ENCODE measurements at regions of chr12 and their contacts with region 1.

Region 1: DNA sequence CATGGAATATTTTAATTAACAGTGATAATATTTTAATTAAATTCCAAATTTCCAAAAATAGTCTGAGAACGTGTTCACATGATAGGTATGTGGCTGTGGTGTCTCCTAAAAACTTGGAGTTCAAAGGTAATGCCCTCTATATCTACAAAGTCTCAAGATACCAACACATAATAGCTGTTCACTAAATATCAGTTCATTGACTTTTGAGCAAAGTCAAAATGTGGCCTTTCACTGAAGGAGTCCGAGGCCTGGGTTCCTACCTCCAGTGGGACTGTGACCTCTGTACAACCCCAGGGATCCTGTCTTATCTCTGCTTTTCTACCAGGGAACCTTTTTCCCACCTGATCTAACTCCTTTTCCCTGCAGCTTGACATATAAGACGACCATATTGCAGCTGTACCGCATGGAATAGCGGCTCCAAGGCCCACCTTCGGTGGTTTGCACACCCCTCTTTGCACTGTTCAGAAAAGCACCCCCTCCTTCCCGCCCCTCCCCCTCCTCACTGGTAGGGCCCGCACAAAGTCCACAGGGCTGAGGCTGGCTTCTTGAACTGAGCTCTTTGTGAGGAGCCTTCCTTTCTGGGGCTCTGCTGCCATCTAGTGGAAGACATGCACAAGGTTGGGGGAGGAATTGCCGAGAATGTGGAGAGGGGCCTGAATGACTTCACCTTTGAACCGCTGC is 3.1 kb downstream of the CCND2 start:
- DNase-seq: peak; percentile 61 to 88 (median 87)
- ATAC-seq: peak; percentile 59
- H3K4me3 ChIP-seq: peak overlapping the region; percentile 85
- H3K4me3 Mint-ChIP-seq: peak overlapping the region; percentile 89 to 99 (median 95)
- H3K27ac ChIP-seq: peak overlapping the region; percentile 97
- H3K27ac Mint-ChIP-seq: peak overlapping the region; percentile 82 to 98 (median 96)
- H3K4me1 ChIP-seq: peaks cover 34 to 56% of the 10 kb centered on the region in 2 donors
- H3K4me1 Mint-ChIP-seq: peaks cover 41 to 66% (median 59%) of the 10 kb centered on the region in 7 donors
- H3K27me3 ChIP-seq: no peaks in the 10 kb centered on the region
- H3K27me3 Mint-ChIP-seq: peaks cover 0 to 2% (median 0%) of the 10 kb centered on the region in 5 donors

Region 2: DNA sequence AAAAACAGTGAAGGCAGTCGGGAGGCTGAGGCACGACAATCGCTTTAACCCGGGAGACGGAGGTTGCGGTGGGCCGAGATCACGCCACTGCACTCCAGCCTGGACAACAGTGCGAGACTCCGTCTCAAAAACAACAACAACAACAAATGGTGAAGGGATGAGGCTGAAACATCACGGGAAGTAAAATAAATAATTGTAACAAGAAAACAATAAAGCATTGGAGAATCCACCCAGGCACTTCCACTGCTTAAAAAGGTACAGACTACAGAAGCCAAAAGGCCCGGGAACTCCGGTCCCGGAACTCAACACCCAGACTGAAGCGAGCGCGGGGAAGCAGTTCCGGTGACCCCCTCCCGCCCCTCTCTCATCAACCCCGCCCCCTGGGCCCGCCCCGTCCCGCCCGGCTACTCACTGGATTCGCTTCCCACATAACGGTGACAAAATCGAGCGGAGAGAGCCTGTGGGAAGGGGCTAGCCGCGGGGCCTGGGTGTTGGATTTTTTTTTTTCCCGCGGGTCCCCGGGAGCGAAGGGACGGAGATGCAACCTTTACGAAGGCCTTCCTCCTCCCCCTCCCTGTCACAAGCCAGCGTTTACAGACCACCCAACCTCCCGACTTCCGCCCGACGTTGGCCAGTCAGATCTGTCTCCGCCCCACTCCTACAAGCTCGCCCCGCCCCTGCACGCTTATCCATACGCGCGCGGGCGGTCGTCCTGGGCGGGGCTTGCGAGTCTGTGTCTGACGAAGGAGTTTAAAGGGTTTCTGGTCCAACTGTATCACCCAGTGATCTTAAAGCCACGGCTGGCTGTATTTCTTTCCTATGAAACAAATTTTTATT is 403.6 kb before region 1 on chr12 and contains the start of gene PARP11:
- CTCF ChIA-PET with region 1: interaction called, 4 read pairs
- POLR2A ChIA-PET with region 1: interaction called, 7 read pairs
- intact Hi-C with region 1: loop called (anchors 1 kb)
- DNase-seq: peak; percentile 93 to 98 (median 96)
- ATAC-seq: peak; percentile 98
- H3K4me3 ChIP-seq: peak within 1 kb of the TSS; percentile 93
- H3K4me3 Mint-ChIP-seq: peak within 1 kb of the TSS; percentile 90 to 99 (median 94)
- H3K27ac ChIP-seq: peak within 1 kb of the TSS; percentile 96
- H3K27ac Mint-ChIP-seq: peak within 1 kb of the TSS; percentile 95 to 99 (median 98)
- H3K4me1 ChIP-seq: peaks cover 23 to 32% of the 10 kb centered on the region in 2 donors
- H3K4me1 Mint-ChIP-seq: peaks cover 31 to 58% (median 55%) of the 10 kb centered on the region in 7 donors
- H3K27me3 ChIP-seq: no peaks in the 10 kb centered on the region
- H3K27me3 Mint-ChIP-seq: peaks cover 0 to 6% (median 0%) of the 10 kb centered on the region in 5 donors
- total RNA-seq, gene PARP11: 21.5 to 37.4 (median 35.1) TPM

Region 3: GRCh38 chr12:3964439-3964838 is 312.2 kb before region 1 on chr12:
- CTCF ChIA-PET with region 1: interaction called, 55 read pairs
- POLR2A ChIA-PET with region 1: interaction called, 21 read pairs
- intact Hi-C with region 1: loop called in 1 of 2 experiments (anchors 1 kb)
- DNase-seq: no peak
- ATAC-seq: no peak
- H3K4me3 ChIP-seq: no peak overlapping the region
- H3K4me3 Mint-ChIP-seq: no peak overlapping the region
- H3K27ac ChIP-seq: no peak overlapping the region
- H3K27ac Mint-ChIP-seq: peak overlapping the region in 4 of 9 donors; percentile 72 to 89 (median 84)
- H3K4me1 ChIP-seq: peaks cover 0 to 20% of the 10 kb centered on the region in 2 donors
- H3K4me1 Mint-ChIP-seq: peaks cover 13 to 47% (median 24%) of the 10 kb centered on the region in 7 donors
- H3K27me3 ChIP-seq: no peaks in the 10 kb centered on the region
- H3K27me3 Mint-ChIP-seq: no peaks in the 10 kb centered on the region

Region 4: DNA sequence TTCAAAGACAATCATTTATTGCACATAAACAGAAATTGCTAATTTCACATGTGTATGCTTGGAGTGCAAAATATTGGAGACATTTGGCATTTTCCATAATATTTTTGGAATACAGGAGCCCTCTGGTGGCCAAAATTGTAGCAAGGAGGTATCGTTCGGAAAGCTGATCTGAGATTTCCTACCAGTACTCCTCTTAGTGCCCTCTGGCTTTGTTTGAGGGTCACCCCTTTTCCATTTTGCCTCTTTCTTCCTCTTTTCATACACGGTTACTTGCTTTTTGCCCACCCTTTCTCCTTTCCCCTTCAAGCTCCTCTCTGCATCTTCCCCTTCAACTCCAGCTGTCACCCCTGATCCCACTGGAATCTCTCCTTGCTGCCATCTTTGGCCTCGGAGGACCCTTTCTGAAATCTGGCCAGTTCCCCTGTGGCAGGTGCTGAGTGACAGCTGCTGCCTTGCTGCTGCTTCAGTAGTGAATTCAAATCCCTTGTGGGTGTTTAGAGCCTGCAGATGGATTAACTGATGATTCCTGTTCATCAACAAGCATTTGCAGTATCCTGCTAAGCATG is 238.8 kb before region 1 on chr12:
- CTCF ChIA-PET with region 1: interaction called, 27 read pairs
- POLR2A ChIA-PET with region 1: no interaction called
- intact Hi-C with region 1: loop called in 1 of 2 experiments (anchors 1 kb)
- DNase-seq: peak in 5 of 9 donors; percentile 19 to 31 (median 21)
- ATAC-seq: no peak
- H3K4me3 ChIP-seq: no peak overlapping the region
- H3K4me3 Mint-ChIP-seq: no peak overlapping the region
- H3K27ac ChIP-seq: no peak overlapping the region
- H3K27ac Mint-ChIP-seq: no peak overlapping the region
- H3K4me1 ChIP-seq: no peaks in the 10 kb centered on the region
- H3K4me1 Mint-ChIP-seq: peaks cover 0 to 15% (median 0%) of the 10 kb centered on the region in 7 donors
- H3K27me3 ChIP-seq: no peaks in the 10 kb centered on the region
- H3K27me3 Mint-ChIP-seq: peaks cover 0 to 39% (median 0%) of the 10 kb centered on the region in 5 donors

Region 5: DNA sequence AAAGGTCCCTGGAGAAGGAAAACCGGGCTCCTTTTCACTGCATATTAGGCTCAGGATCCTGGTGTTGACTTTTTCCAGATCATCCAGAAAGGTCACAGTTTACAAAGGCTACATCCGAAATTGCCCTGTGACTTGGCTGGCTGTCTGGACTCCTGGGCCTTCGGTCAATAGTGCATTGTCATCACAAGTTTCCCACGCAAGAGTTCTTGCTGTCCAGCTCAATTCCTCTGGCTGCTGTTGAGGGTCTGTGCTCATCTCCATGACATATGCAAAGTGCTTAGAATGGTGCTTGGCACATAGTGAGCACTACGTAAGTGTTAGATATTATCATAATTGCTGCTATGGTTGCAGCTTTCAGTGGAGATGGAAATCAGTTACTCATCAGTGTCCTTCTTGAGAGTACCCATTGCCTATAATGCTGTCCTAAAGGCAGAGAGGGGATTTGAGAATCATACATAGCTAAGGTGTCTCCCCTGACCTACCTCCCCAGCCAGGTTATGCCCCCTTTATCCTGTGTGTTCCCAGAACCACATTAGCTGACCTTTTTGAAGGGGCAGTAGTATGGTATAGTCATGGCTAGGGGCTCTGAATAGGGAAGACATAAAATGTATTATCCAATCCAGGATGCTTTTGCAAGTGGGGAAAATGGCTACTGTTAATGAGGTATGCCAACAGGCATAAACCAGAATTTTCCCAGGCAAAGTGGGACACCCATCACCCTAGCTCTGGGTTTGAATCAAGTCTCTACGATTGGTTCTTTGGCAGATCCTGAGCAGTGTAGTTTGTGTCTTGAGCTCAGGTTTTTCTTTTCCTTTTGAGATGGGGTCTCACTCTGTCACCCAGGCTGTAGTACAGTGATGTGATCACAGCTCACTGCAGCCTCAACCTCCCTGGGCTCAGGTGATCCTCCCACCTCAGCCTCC is 135.1 kb before region 1 on chr12:
- CTCF ChIA-PET with region 1: interaction called, 28 read pairs
- POLR2A ChIA-PET with region 1: interaction called, 13 read pairs
- intact Hi-C with region 1: loop called (anchors 1 kb)
- DNase-seq: peak in 1 of 9 donors; percentile 20
- ATAC-seq: peak; percentile 16
- H3K4me3 ChIP-seq: no peak overlapping the region
- H3K4me3 Mint-ChIP-seq: peak overlapping the region; percentile 86 to 98 (median 92)
- H3K27ac ChIP-seq: peak overlapping the region; percentile 85
- H3K27ac Mint-ChIP-seq: peak overlapping the region; percentile 93 to 100 (median 96)
- H3K4me1 ChIP-seq: peaks cover 14 to 23% of the 10 kb centered on the region in 2 donors
- H3K4me1 Mint-ChIP-seq: peaks cover 8 to 85% (median 36%) of the 10 kb centered on the region in 7 donors
- H3K27me3 ChIP-seq: no peaks in the 10 kb centered on the region
- H3K27me3 Mint-ChIP-seq: no peaks in the 10 kb centered on the region

Region 6: GRCh38 chr12:4251216-4251891 is 25.3 kb before region 1 on chr12:
- CTCF ChIA-PET with region 1: interaction called, 42 read pairs
- POLR2A ChIA-PET with region 1: interaction called, 7 read pairs
- intact Hi-C with region 1: loop called (anchors 1 to 2 kb)
- DNase-seq: peak in 7 of 9 donors; percentile 23 to 62 (median 52)
- ATAC-seq: peak; percentile 85
- H3K4me3 ChIP-seq: no peak overlapping the region
- H3K4me3 Mint-ChIP-seq: peak overlapping the region in 5 of 10 donors; percentile 7 to 61 (median 23)
- H3K27ac ChIP-seq: no peak overlapping the region
- H3K27ac Mint-ChIP-seq: peak overlapping the region in 6 of 9 donors; percentile 1 to 43 (median 10)
- H3K4me1 ChIP-seq: peaks cover 0 to 6% of the 10 kb centered on the region in 2 donors
- H3K4me1 Mint-ChIP-seq: peaks cover 8 to 11% (median 9%) of the 10 kb centered on the region in 7 donors
- H3K27me3 ChIP-seq: no peaks in the 10 kb centered on the region
- H3K27me3 Mint-ChIP-seq: peaks cover 0 to 10% (median 7%) of the 10 kb centered on the region in 5 donors

Region 7: GRCh38 chr12:4353785-4354208 is 77.1 kb after region 1 on chr12:
- CTCF ChIA-PET with region 1: no interaction called
- POLR2A ChIA-PET with region 1: no interaction called
- intact Hi-C with region 1: no loop called
- DNase-seq: peak in 7 of 9 donors; percentile 32 to 64 (median 53)
- ATAC-seq: peak; percentile 90
- H3K4me3 ChIP-seq: no peak overlapping the region
- H3K4me3 Mint-ChIP-seq: no peak overlapping the region
- H3K27ac ChIP-seq: no peak overlapping the region
- H3K27ac Mint-ChIP-seq: peak overlapping the region in 7 of 9 donors; percentile 14 to 71 (median 51)
- H3K4me1 ChIP-seq: no peaks in the 10 kb centered on the region
- H3K4me1 Mint-ChIP-seq: peaks cover 0 to 9% (median 4%) of the 10 kb centered on the region in 7 donors
- H3K27me3 ChIP-seq: no peaks in the 10 kb centered on the region
- H3K27me3 Mint-ChIP-seq: peaks cover 0 to 2% (median 0%) of the 10 kb centered on the region in 5 donors

Region 8: GRCh38 chr12:4843907-4844306 is 567.2 kb after region 1 on chr12:
- CTCF ChIA-PET with region 1: no interaction called
- POLR2A ChIA-PET with region 1: no interaction called
- intact Hi-C with region 1: no loop called
- DNase-seq: no peak
- ATAC-seq: no peak
- H3K4me3 ChIP-seq: no peak overlapping the region
- H3K4me3 Mint-ChIP-seq: no peak overlapping the region
- H3K27ac ChIP-seq: no peak overlapping the region
- H3K27ac Mint-ChIP-seq: no peak overlapping the region
- H3K4me1 ChIP-seq: no peaks in the 10 kb centered on the region
- H3K4me1 Mint-ChIP-seq: no peaks in the 10 kb centered on the region
- H3K27me3 ChIP-seq: no peaks in the 10 kb centered on the region
- H3K27me3 Mint-ChIP-seq: peaks cover 6 to 43% (median 17%) of the 10 kb centered on the region in 5 donors